MCF 10A (cell line): ENCODE measurements at regions of chr4 and their contacts with region 1.

Region 1: GRCh38 chr4:95023110-95023509 is 265.4 kb downstream of the BMPR1B start:
- DNase-seq: peak; percentile 71
- H3K4me3 Mint-ChIP-seq: no peak overlapping the region
- H3K27ac Mint-ChIP-seq: peak overlapping the region; percentile 42
- H3K4me1 Mint-ChIP-seq: peaks cover 6% of the 10 kb centered on the region
- H3K27me3 Mint-ChIP-seq: no peaks in the 10 kb centered on the region
- CTCF ChIP-seq: no peak

Region 2: DNA sequence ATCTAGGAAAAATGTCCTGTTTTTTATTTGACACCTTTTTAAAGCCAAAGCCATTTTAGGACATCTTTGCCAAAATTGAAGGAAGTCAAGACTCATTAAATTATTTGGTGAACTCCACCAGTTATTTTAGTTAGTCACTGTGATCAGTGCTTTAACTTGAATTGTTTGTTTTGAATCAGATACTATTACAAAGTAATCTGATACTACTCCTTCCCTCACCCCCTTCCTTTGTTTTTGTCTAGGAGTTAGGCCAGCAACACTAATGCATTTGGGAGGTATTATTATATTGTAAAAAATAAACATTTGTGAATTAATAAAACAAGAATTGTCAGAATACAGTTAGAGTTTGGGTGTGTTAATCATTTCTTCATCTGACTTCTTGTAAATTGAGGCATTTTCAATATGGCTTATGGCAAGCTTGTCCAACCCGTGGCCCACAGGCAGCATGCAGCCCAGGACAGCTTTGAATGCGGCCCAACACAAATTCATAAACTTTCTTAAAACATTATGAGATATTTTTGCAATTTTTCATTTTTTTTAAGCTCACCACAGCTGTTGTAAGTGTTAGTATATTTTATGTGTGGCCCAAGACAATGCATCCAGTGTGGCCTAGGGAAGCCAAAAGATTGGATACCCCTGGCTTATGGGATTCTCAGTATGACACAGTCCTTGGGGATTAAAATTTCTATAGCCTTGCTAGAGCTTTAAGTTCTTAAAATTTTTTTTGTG is 83.2 kb before region 1 on chr4:
- CTCF ChIA-PET with region 1: no interaction called
- POLR2A ChIA-PET with region 1: no interaction called
- intact Hi-C with region 1: loop called (anchors 5 kb)
- DNase-seq: peak; percentile 51
- H3K4me3 Mint-ChIP-seq: no peak overlapping the region
- H3K27ac Mint-ChIP-seq: no peak overlapping the region
- H3K4me1 Mint-ChIP-seq: peaks cover 20% of the 10 kb centered on the region
- H3K27me3 Mint-ChIP-seq: no peaks in the 10 kb centered on the region
- CTCF ChIP-seq: no peak

Region 3: GRCh38 chr4:95114521-95114920 is 91.4 kb after region 1 on chr4:
- CTCF ChIA-PET with region 1: no interaction called
- POLR2A ChIA-PET with region 1: no interaction called
- intact Hi-C with region 1: no loop called
- DNase-seq: no peak
- H3K4me3 Mint-ChIP-seq: no peak overlapping the region
- H3K27ac Mint-ChIP-seq: no peak overlapping the region
- H3K4me1 Mint-ChIP-seq: no peaks in the 10 kb centered on the region
- H3K27me3 Mint-ChIP-seq: no peaks in the 10 kb centered on the region
- CTCF ChIP-seq: no peak